Endothelial cell of umbilical vein (primary cell): ENCODE measurements at regions of chr17 and their contacts with region 1.

Region 1: DNA sequence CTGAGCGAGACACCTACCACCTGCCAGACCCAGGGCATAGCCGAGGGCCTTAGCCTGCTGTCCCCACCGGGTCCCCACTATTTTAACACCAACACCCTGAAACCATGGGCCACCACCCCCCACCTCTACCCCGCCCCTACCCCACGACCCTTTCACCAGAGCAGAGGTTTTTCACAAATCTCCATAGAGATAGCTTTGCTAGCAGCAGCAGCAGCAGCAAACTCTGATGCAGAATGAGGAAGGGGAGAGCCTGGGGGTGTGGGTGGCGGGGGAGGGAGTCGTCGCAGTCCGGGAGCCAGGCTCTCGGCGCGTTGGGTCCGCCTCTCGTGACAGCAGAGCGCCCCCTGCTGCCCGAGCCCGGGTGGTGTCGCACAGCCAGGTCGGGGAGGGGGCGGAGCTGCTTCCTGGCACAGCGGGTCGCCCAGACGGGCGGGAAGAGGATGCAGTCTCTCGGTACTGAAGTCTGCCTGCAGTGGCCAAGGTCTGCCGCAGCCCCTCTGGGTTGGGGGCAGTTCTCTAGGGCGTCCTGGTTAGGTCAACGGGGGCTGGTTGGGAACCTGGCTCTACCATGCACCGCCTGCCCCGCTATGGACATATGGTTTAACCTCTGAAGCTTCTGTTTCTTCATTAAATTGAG is 38.1 kb upstream of the CCDC182 start:
- DNase-seq: peak; percentile 59
- H3K4me3 ChIP-seq: no peak overlapping the region
- H3K27ac ChIP-seq: no peak overlapping the region
- H3K4me1 ChIP-seq: no peaks in the 10 kb centered on the region
- H3K27me3 ChIP-seq: peaks cover 15 to 21% of the 10 kb centered on the region in 2 experiments
- CTCF ChIP-seq: peak; percentile 95 to 99
- POLR2A ChIP-seq: no peak

Region 2: GRCh38 chr17:57130761-57131461 is 652.3 kb before region 1 on chr17:
- CTCF ChIA-PET with region 1: interaction called, 36 read pairs
- POLR2A ChIA-PET with region 1: no interaction called
- dilution Hi-C with region 1: no loop called
- intact Hi-C with region 1: loop called (anchors 1 kb)
- DNase-seq: peak; percentile 57
- H3K4me3 ChIP-seq: no peak overlapping the region
- H3K27ac ChIP-seq: no peak overlapping the region
- H3K4me1 ChIP-seq: no peaks in the 10 kb centered on the region
- H3K27me3 ChIP-seq: no peaks in the 10 kb centered on the region
- CTCF ChIP-seq: peak; percentile 46 to 85
- POLR2A ChIP-seq: no peak

Region 3: DNA sequence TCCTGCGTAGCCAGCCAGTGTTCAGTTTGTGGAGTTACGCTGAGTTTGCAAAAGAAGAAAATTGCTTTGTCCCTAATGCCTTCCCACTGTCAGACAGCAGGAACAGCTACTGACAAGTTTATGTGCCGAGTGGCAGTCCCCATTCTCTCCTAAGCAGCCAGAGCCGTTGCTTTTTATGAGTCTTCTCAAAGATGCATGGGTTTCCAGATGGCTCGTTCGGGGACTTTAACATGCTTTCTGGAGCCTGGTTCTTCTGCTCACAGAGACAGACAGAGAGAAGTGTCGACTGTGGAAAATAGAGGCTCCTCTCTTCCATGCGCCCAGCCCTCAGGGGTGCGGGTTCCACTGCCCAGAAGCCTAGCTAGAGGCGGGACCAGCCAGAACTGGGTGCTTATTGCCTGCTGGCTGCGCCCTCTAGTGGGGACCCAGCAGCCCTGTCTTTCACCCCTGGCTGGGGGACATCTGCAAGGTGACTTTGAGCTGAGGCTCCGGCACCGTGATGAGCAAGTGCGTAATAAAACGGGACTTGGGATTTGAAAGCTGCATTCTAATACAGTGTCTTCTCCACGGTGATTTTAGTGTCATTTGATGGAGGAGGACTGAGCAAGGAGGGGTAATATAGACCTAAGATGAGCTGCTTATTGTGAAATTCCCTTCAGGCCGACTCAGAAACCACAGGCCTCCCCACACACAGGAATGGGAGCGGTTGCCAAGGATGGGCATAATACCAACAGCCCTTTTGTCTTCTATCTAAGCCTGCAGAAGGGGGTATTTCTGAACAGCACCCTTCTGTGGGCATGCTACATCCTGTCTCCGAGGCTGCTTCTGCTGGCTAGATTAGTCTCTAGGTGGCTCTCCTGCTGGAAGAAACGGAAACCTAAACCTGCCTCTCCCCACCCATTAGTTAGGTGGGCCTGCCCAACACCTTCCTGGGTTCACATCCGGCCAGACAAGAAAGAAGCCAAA is 111.3 kb before region 1 on chr17:
- CTCF ChIA-PET with region 1: interaction called, 27 read pairs
- POLR2A ChIA-PET with region 1: no interaction called
- dilution Hi-C with region 1: no loop called
- intact Hi-C with region 1: loop called (anchors 2 kb)
- DNase-seq: peak; percentile 55
- H3K4me3 ChIP-seq: no peak overlapping the region
- H3K27ac ChIP-seq: no peak overlapping the region
- H3K4me1 ChIP-seq: no peaks in the 10 kb centered on the region
- H3K27me3 ChIP-seq: no peaks in the 10 kb centered on the region
- CTCF ChIP-seq: peak; percentile 91 to 94
- POLR2A ChIP-seq: no peak

Region 4: GRCh38 chr17:57747221-57748017 is 35.8 kb before region 1 on chr17:
- CTCF ChIA-PET with region 1: interaction called, 27 read pairs
- POLR2A ChIA-PET with region 1: interaction called, 3 read pairs
- dilution Hi-C with region 1: no loop called
- intact Hi-C with region 1: loop called (anchors 1 kb)
- DNase-seq: peak; percentile 74
- H3K4me3 ChIP-seq: no peak overlapping the region
- H3K27ac ChIP-seq: no peak overlapping the region
- H3K4me1 ChIP-seq: no peaks in the 10 kb centered on the region
- H3K27me3 ChIP-seq: peaks cover 6 to 20% of the 10 kb centered on the region in 2 experiments
- CTCF ChIP-seq: peak; percentile 68 to 73
- POLR2A ChIP-seq: no peak

Region 5: DNA sequence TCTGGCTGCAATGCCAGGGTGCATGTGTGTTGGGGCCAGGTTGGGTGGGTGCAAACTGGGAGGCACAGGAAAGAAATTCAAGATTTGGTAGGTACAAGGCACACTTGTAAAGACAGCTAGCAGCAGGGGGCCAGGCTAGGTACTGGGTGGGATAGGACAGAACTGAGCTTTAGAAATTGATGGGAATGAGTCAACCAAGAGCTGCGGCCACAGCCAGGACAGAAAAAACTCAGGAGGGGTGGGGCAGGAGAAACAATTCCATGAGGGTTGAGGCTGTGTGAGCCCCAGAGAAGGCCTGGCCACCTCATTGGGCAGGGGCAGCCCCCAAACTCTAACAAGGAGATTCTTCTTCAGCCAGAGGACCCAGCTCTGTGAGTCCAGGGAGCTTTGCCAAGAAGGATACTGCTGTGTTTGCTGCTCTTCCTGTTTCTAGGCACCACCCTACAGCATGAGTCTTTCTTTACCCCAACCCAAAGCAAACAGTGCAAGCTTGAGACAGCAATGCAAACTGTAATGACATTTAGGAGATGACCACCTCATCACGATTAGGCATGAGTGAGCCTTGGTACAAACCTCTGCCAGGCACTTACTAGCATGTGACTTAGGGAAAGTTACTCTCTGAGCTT is 16.8 kb before region 1 on chr17:
- CTCF ChIA-PET with region 1: interaction called, 57 read pairs
- POLR2A ChIA-PET with region 1: no interaction called
- dilution Hi-C with region 1: no loop called
- intact Hi-C with region 1: no loop called
- DNase-seq: peak; percentile 14
- H3K4me3 ChIP-seq: no peak overlapping the region
- H3K27ac ChIP-seq: no peak overlapping the region
- H3K4me1 ChIP-seq: no peaks in the 10 kb centered on the region
- H3K27me3 ChIP-seq: peaks cover 15 to 21% of the 10 kb centered on the region in 2 experiments
- CTCF ChIP-seq: no peak
- POLR2A ChIP-seq: no peak

Region 6: GRCh38 chr17:57794841-57795240 is 11.6 kb after region 1 on chr17:
- CTCF ChIA-PET with region 1: interaction called, 22 read pairs
- POLR2A ChIA-PET with region 1: no interaction called
- dilution Hi-C with region 1: no loop called
- intact Hi-C with region 1: no loop called
- DNase-seq: no peak
- H3K4me3 ChIP-seq: no peak overlapping the region
- H3K27ac ChIP-seq: no peak overlapping the region
- H3K4me1 ChIP-seq: no peaks in the 10 kb centered on the region
- H3K27me3 ChIP-seq: peaks cover 3% of the 10 kb centered on the region in 2 experiments
- CTCF ChIP-seq: no peak
- POLR2A ChIP-seq: no peak

Region 7: DNA sequence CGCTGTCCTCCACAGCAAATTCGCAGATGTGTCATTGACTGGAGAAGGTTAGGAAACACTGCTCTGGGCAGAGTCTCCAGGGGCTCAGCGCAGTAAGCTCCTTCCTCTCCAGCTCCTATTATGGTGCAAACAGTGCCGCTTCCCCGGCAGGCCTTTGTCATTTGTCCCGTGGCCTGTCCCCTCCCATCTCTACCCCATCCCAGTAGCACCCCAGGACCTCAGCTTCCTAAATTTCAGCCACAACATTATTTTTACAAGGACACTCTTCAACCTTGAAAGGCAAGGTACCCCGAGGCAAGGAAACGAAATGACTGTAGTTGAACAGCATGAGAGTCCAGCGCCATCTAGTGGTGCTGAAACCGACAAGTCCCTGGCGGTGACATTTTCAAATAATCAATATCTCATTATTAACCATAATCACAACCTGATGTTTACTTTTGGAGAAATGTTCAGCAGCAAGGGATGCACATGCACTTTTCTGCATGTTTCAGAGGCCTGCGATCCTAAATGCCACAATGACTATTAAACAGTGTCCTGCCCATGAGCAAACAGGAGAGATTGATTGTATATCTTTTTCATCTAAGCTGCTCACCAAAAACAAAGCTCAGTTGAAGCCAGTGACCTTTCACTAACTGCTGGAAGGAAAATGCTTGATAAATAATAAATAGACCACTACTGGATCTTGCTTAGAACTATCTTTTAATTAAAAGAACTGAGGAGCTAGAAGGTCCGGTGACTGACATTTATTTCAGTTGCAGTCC is 50.1 kb after region 1 on chr17:
- CTCF ChIA-PET with region 1: interaction called, 37 read pairs
- POLR2A ChIA-PET with region 1: no interaction called
- dilution Hi-C with region 1: no loop called
- intact Hi-C with region 1: no loop called
- DNase-seq: peak; percentile 72
- H3K4me3 ChIP-seq: peak overlapping the region in 2 of 3 experiments; percentile 23 to 54
- H3K27ac ChIP-seq: no peak overlapping the region
- H3K4me1 ChIP-seq: no peaks in the 10 kb centered on the region
- H3K27me3 ChIP-seq: no peaks in the 10 kb centered on the region
- CTCF ChIP-seq: peak; percentile 83 to 96
- POLR2A ChIP-seq: no peak